CD8-positive, alpha-beta T cell (primary cell): ENCODE measurements at regions of chr14 and their contacts with region 1.

Region 1: GRCh38 chr14:88551094-88551870 is 3.5 kb downstream of the PTPN21 start:
- DNase-seq: peak in 7 of 9 experiments; percentile 23 to 71 (median 40)
- ATAC-seq: no peak
- H3K4me3 ChIP-seq: peak overlapping the region; percentile 36 to 47
- H3K4me3 Mint-ChIP-seq: peak overlapping the region; percentile 64
- H3K27ac ChIP-seq: no peak overlapping the region
- H3K27ac Mint-ChIP-seq: no peak overlapping the region
- H3K4me1 ChIP-seq: peaks cover 20% of the 10 kb centered on the region
- H3K4me1 Mint-ChIP-seq: peaks cover 11% of the 10 kb centered on the region
- H3K27me3 ChIP-seq: peaks cover 36 to 42% of the 10 kb centered on the region in 2 experiments
- H3K27me3 Mint-ChIP-seq: peaks cover 45% of the 10 kb centered on the region
- CTCF ChIP-seq: no peak

Region 2: DNA sequence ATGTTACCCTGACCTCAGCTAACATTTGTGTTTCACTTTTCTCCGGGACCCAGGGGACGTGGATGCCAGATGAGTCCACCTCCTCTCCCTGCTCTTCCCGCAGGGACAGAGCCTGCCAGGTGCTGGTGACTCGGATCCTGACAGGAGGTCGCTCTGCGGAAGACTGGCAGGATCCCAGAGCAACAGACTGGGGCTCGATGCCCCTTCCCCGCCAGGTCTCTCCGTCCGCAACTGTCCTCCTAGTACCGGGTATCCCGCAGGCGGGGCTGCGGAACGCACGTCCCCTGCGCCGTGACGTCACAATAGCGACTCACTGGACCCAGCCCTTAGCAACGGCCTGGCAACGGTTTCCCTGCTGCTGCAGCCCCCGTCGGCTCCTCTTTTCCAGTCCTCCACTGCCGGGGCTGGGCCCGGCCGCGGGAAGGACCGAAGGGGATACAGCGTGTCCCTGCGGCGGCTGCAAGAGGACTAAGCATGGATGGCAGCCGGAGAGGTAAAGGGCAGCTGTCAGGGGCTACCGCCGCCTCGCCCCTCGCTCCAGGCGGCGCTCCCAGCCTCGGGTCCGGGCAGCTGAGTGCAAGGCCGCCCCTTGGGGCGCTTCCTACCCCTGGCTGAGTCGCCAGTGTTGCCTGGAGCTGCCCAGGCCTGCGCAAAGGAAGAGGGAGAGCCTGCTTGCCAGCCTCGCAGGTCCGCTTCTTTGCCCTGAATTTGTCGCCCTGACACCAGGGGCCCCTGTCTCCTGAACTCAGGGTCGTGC is 165.8 kb before region 1 on chr14 and contains the start of gene SPATA7:
- CTCF ChIA-PET with region 1: no interaction called
- POLR2A ChIA-PET with region 1: no interaction called
- intact Hi-C with region 1: loop called in 1 of 2 experiments (anchors 10 kb)
- DNase-seq: peak; percentile 41 to 89 (median 79)
- ATAC-seq: peak; percentile 88
- H3K4me3 ChIP-seq: peak within 1 kb of the TSS; percentile 93 to 96
- H3K4me3 Mint-ChIP-seq: peak within 1 kb of the TSS; percentile 94
- H3K27ac ChIP-seq: peak within 1 kb of the TSS; percentile 72 to 77
- H3K27ac Mint-ChIP-seq: peak within 1 kb of the TSS; percentile 87
- H3K4me1 ChIP-seq: peaks cover 8% of the 10 kb centered on the region
- H3K4me1 Mint-ChIP-seq: peaks cover 19% of the 10 kb centered on the region
- H3K27me3 ChIP-seq: no peaks in the 10 kb centered on the region
- H3K27me3 Mint-ChIP-seq: no peaks in the 10 kb centered on the region
- CTCF ChIP-seq: no peak
- total RNA-seq, gene SPATA7: 1.9 to 3.2 TPM

Region 3: GRCh38 chr14:88452231-88452630 is 99.1 kb before region 1 on chr14:
- CTCF ChIA-PET with region 1: no interaction called
- POLR2A ChIA-PET with region 1: no interaction called
- intact Hi-C with region 1: no loop called
- DNase-seq: no peak
- ATAC-seq: no peak
- H3K4me3 ChIP-seq: no peak overlapping the region
- H3K4me3 Mint-ChIP-seq: no peak overlapping the region
- H3K27ac ChIP-seq: no peak overlapping the region
- H3K27ac Mint-ChIP-seq: no peak overlapping the region
- H3K4me1 ChIP-seq: no peaks in the 10 kb centered on the region
- H3K4me1 Mint-ChIP-seq: no peaks in the 10 kb centered on the region
- H3K27me3 ChIP-seq: no peaks in the 10 kb centered on the region
- H3K27me3 Mint-ChIP-seq: no peaks in the 10 kb centered on the region
- CTCF ChIP-seq: no peak

Region 4: GRCh38 chr14:88804035-88804434 is 252.8 kb after region 1 on chr14:
- CTCF ChIA-PET with region 1: no interaction called
- POLR2A ChIA-PET with region 1: no interaction called
- intact Hi-C with region 1: no loop called
- DNase-seq: no peak
- ATAC-seq: no peak
- H3K4me3 ChIP-seq: no peak overlapping the region
- H3K4me3 Mint-ChIP-seq: no peak overlapping the region
- H3K27ac ChIP-seq: no peak overlapping the region
- H3K27ac Mint-ChIP-seq: no peak overlapping the region
- H3K4me1 ChIP-seq: no peaks in the 10 kb centered on the region
- H3K4me1 Mint-ChIP-seq: no peaks in the 10 kb centered on the region
- H3K27me3 ChIP-seq: no peaks in the 10 kb centered on the region
- H3K27me3 Mint-ChIP-seq: peaks cover 42% of the 10 kb centered on the region
- CTCF ChIP-seq: no peak

Region 5: GRCh38 chr14:89409961-89410360 is 858.7 kb after region 1 on chr14:
- CTCF ChIA-PET with region 1: no interaction called
- POLR2A ChIA-PET with region 1: no interaction called
- intact Hi-C with region 1: loop called in 1 of 2 experiments (anchors 5 kb)
- DNase-seq: no peak
- ATAC-seq: no peak
- H3K4me3 ChIP-seq: no peak overlapping the region
- H3K4me3 Mint-ChIP-seq: peak overlapping the region; percentile 12
- H3K27ac ChIP-seq: no peak overlapping the region
- H3K27ac Mint-ChIP-seq: no peak overlapping the region
- H3K4me1 ChIP-seq: peaks cover 45% of the 10 kb centered on the region
- H3K4me1 Mint-ChIP-seq: peaks cover 69% of the 10 kb centered on the region
- H3K27me3 ChIP-seq: no peaks in the 10 kb centered on the region
- H3K27me3 Mint-ChIP-seq: no peaks in the 10 kb centered on the region
- CTCF ChIP-seq: no peak